ENCODE measurements at regions of chr14 and their contacts with region 1.

Region 1: GRCh38 chr14:50363714-50364111 is 33.0 kb downstream of the CDKL1 start:
- DNase-seq: peak; percentile 73
- H3K4me3 Mint-ChIP-seq: peak overlapping the region; percentile 79
- H3K27ac Mint-ChIP-seq: peak overlapping the region; percentile 90
- H3K4me1 Mint-ChIP-seq: peaks cover 25% of the 10 kb centered on the region
- H3K27me3 Mint-ChIP-seq: peaks cover 4% of the 10 kb centered on the region

Region 2: GRCh38 chr14:50311975-50312733 is 51.6 kb before region 1 on chr14 and contains the starts of genes DMAC2L and L2HGDH:
- CTCF ChIA-PET with region 1: interaction called, 6 read pairs
- POLR2A ChIA-PET with region 1: interaction called, 32 read pairs
- DNase-seq: peak; percentile 91
- H3K4me3 Mint-ChIP-seq: peak within 1 kb of the TSS; percentile 95
- H3K27ac Mint-ChIP-seq: peak within 1 kb of the TSS; percentile 84
- H3K4me1 Mint-ChIP-seq: peaks cover 35% of the 10 kb centered on the region
- H3K27me3 Mint-ChIP-seq: no peaks in the 10 kb centered on the region
- total RNA-seq, gene DMAC2L: 12.2 to 12.6 TPM
- total RNA-seq, gene L2HGDH: 9.7 to 10.0 TPM

Region 3: DNA sequence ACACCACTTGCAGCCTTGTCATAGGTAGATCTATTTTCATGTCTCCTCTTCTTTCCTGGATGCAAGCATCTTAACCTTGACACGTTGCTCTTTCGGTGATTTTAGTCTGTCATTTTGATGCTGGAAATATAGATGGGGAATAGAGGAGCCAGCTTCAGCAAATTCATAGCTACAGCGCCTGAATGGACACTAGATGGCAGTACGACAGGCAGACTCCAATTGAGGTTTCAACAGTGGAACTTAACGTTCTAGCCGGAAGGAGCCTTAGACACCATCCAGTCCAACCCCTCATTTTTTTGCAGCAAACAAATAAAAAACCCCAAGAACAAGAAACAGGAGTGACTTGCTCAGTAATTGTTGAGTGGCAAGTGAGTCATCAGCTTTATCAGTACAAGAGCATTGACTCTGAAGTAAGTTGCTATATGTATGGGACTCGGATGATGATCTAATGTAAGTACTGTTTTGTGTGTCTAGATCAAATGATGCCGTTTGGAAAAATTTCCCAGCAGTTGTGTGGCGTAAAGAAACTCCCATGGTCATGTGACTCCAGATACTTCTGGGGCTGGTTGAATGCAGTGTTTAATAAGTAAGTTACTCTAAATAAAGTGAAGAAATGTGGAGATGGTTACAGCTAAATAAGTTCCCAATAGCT is 42.6 kb before region 1 on chr14:
- CTCF ChIA-PET with region 1: interaction called, 26 read pairs
- POLR2A ChIA-PET with region 1: interaction called, 14 read pairs
- DNase-seq: peak; percentile 74
- H3K4me3 Mint-ChIP-seq: no peak overlapping the region
- H3K27ac Mint-ChIP-seq: no peak overlapping the region
- H3K4me1 Mint-ChIP-seq: peaks cover 20% of the 10 kb centered on the region
- H3K27me3 Mint-ChIP-seq: no peaks in the 10 kb centered on the region

Region 4: GRCh38 chr14:50344116-50344775 is 19.5 kb before region 1 on chr14:
- CTCF ChIA-PET with region 1: no interaction called
- POLR2A ChIA-PET with region 1: interaction called, 11 read pairs
- DNase-seq: peak; percentile 44
- H3K4me3 Mint-ChIP-seq: no peak overlapping the region
- H3K27ac Mint-ChIP-seq: no peak overlapping the region
- H3K4me1 Mint-ChIP-seq: peaks cover 13% of the 10 kb centered on the region
- H3K27me3 Mint-ChIP-seq: no peaks in the 10 kb centered on the region

Region 5: GRCh38 chr14:50396631-50397390 is 33.1 kb after region 1 on chr14 and contains the start of gene CDKL1:
- CTCF ChIA-PET with region 1: no interaction called
- POLR2A ChIA-PET with region 1: interaction called, 23 read pairs
- DNase-seq: peak; percentile 39
- H3K4me3 Mint-ChIP-seq: peak within 1 kb of the TSS; percentile 78
- H3K27ac Mint-ChIP-seq: no peak within 1 kb of the TSS
- H3K4me1 Mint-ChIP-seq: peaks cover 15% of the 10 kb centered on the region
- H3K27me3 Mint-ChIP-seq: peaks cover 6% of the 10 kb centered on the region
- total RNA-seq, gene CDKL1: 5.3 to 8.8 TPM

Region 6: GRCh38 chr14:50532502-50533240 is 169.0 kb after region 1 on chr14 and contains the start of gene MAP4K5:
- CTCF ChIA-PET with region 1: interaction called, 3 read pairs
- POLR2A ChIA-PET with region 1: interaction called, 11 read pairs
- DNase-seq: peak; percentile 90
- H3K4me3 Mint-ChIP-seq: peak within 1 kb of the TSS; percentile 85
- H3K27ac Mint-ChIP-seq: peak within 1 kb of the TSS; percentile 55
- H3K4me1 Mint-ChIP-seq: peaks cover 37% of the 10 kb centered on the region
- H3K27me3 Mint-ChIP-seq: peaks cover 11% of the 10 kb centered on the region
- total RNA-seq, gene MAP4K5: 22.0 TPM